ENCODE measurements at regions of chr18 and their contacts with region 1.

Region 1: DNA sequence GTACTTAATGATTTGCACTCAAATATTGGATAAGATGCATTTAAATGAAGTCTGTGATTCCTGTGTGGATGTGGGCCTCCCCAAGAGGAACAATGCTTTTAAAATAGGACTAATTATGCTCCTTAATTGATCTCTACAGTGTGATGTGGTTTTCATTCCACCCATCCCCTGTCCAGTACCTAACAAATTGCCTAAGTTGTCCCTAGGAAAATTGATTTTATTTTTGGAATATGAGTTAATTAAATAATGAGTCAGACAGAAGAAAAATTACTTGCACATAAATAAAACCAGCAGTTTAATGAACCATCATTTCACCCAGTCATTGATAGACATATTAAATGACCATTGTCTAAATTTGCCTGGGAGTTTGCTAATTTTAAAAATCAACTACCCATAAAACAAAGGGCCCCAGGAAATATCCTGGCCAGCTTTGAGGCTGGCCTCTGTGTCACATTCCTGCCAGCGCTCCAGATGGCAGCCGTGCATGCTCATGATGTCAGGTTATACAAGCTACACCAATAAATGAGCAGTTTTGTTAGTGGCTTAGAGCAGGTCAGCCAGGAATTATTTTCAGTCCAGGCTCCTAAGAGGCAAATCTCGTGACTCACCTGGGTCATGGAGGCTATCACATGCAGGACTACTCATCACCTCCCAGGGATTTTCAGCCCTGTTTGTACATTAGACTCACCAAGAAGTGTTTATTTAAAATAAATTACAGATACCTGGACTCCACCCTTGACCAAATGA is 31.9 kb downstream of the ABHD3 start:
- DNase-seq: peak in 1 of 2 donors; percentile 50
- ATAC-seq: no peak
- H3K4me3 ChIP-seq: no peak overlapping the region
- H3K27ac ChIP-seq: peak overlapping the region in 1 of 2 donors; percentile 25
- H3K4me1 ChIP-seq: peaks cover 0 to 2% of the 10 kb centered on the region in 2 donors
- H3K27me3 ChIP-seq: no peaks in the 10 kb centered on the region

Region 2: DNA sequence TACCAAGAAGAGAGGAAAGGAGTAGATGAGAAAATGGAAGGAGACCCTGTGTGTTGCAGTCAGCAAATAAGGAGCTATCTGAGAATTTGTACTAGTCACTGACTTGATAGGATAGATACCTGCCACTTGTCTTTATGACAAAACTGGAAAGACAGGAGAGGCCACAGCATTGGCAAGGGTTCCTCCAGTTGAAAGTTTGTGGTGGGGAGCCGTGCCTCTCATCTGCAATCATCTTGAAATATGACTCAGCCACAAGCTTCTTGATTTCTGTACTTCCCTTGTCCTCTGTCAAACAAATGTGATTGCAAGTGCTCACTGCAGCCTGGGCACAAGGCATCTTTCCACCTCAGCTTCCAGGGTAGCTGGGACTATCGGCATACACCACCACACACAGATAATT is 331.6 kb before region 1 on chr18:
- intact Hi-C with region 1: no loop called
- DNase-seq: no peak
- ATAC-seq: no peak
- H3K4me3 ChIP-seq: no peak overlapping the region
- H3K27ac ChIP-seq: no peak overlapping the region
- H3K4me1 ChIP-seq: no peaks in the 10 kb centered on the region
- H3K27me3 ChIP-seq: no peaks in the 10 kb centered on the region

Region 3: DNA sequence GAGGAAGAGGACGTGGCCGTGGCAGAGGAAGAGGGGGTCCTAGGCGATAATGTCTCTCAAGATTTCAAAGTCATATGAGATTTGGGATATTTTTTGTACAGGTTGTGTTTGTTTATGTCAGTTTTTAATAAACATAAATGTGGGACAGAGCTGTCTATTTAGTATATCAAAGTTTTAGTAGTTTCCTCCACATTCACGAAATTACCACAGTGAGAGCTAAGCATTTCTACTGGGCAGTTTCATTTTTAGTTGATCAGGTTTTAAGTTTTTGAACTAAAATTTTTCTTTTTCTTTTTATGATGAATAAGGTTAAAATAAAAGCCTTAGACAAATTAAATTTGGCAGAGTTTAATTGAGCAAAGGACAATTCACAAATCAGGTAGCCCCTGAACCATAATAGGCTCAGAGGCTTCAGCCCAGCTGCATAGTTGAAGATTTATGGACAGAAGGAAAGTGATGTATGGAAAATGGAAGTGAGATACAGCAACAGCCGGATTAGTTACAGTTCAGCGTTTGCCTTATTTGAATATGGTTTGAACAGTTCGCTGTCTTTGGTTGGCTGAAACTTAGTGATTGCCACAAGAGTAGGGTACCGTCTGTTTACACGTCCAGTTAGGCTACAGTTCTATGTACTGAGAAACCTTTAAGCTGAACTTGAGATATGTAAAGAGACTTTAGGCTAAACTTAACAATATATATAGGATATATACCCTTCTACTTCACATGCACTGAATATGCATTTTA is 43.4 kb before region 1 on chr18:
- intact Hi-C with region 1: loop called in 1 of 2 experiments (anchors 10 kb)
- DNase-seq: no peak
- ATAC-seq: no peak
- H3K4me3 ChIP-seq: no peak overlapping the region
- H3K27ac ChIP-seq: no peak overlapping the region
- H3K4me1 ChIP-seq: no peaks in the 10 kb centered on the region
- H3K27me3 ChIP-seq: no peaks in the 10 kb centered on the region

Region 4: DNA sequence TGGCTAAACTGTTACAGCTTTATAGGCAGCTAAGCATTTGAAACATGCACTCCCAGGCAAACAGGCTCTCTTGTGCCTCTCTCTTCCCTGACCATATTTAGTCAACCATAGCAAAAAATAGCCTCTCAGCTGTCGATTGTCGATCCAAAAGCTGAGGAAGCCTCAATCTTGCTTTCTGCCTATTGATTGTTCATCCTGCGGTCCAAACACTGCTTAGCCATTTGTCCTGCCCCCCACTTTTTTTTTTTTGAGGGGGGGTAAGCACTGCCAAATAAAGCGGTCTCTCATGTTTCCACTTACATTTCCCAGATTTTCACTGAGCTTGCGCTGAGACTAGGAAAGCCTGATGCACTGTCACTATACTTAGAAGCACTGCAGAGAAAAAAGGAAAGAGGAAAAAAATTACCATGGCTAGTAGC is 158.7 kb after region 1 on chr18:
- intact Hi-C with region 1: no loop called
- DNase-seq: peak in 1 of 2 donors; percentile 48
- ATAC-seq: peak; percentile 90
- H3K4me3 ChIP-seq: peak overlapping the region; percentile 82 to 98
- H3K27ac ChIP-seq: peak overlapping the region; percentile 71 to 87
- H3K4me1 ChIP-seq: peaks cover 0 to 2% of the 10 kb centered on the region in 2 donors
- H3K27me3 ChIP-seq: no peaks in the 10 kb centered on the region

Region 5: DNA sequence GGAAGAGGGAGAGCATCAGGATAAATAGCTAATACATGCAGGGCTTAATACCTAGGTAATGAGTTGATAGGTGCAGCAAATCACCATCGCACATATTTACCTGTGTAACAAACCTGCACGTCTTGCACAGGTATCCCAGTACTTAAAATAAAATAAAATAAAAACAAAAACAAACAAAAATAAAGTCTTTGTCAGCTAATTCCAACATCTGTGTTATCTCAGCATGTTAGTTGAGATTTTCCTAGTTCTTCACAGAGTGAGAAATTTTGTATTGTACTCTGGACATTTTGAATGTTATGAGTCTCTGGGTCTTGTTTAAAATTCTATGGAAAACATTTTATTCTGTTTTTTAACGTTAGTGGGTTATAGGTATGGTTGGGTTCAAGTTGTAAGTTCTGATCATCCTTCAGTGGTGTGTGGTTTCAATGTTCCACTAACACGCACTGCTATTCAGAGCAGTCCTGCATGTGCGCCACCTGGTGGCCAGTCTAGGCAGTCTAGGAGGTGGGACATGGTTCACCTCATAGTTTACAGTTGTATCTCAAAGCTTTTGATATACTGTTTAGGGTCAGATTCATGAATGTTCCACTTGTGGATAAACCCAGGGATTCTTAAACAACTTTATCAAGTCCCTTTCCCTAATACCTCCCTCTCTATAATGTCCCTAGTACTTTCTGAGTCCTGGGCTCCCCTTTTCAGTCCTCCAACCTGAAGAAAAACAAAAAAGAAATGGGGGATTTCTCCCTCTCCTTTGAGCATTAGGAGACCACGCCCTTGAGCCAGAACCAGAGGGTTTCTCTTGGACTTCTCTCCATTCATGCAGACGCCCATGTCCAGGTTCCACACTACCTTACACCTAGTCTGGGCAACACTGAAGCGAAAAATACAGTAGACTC is 283.3 kb after region 1 on chr18:
- intact Hi-C with region 1: no loop called
- DNase-seq: peak; percentile 85 to 95
- ATAC-seq: peak; percentile 88
- H3K4me3 ChIP-seq: no peak overlapping the region
- H3K27ac ChIP-seq: no peak overlapping the region
- H3K4me1 ChIP-seq: no peaks in the 10 kb centered on the region
- H3K27me3 ChIP-seq: no peaks in the 10 kb centered on the region